ENCODE measurements at regions of chrX and their contacts with region 1.

Region 1: GRCh38 chrX:119067023-119067739 is 5.6 kb upstream of the CT47C1 start:
- DNase-seq: peak; percentile 52
- H3K4me3 ChIP-seq: no peak overlapping the region
- H3K27ac ChIP-seq: no peak overlapping the region
- H3K4me1 ChIP-seq: no peaks in the 10 kb centered on the region
- H3K27me3 ChIP-seq: no peaks in the 10 kb centered on the region
- CTCF ChIP-seq: peak; percentile 47 to 72 (median 56)
- EP300 ChIP-seq: no peak
- POLR2A ChIP-seq: no peak

Region 2: DNA sequence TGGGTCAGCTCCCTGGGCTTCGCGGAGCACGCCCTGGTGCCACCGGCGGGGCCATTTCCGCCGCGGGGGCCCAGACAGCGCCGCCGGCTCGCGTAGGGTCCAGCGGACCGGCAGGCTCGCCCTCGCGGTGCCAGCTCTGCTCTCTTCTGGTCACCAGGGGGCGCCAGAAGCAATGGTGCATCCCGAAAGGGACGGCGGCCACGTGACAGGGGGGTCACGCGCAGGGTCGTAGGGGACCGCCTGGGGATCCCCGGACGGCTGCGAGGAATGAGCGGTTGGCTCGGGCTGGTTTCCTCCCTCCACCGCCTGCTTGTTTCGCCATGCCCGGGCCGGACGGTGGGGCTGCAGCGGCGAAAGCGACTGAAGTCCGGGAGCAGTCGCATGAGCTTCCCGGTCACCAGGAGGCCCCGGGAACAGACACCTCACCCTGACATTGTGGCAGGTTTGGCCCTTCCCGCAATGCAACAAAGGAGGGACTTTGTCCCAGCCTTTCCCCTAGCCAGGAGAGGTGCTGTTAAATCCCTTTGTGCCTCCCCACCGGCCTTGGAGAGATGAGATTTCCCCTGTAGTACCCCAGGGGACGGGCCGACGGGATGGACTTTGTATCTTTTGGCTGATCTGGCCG is 227.7 kb before region 1 on chrX:
- in situ Hi-C with region 1: loop called in 1 of 4 experiments (anchors 25 kb)
- intact Hi-C with region 1: no loop called
- DNase-seq: peak; percentile 80
- H3K4me3 ChIP-seq: peak overlapping the region in 3 of 4 donors; percentile 30 to 56 (median 39)
- H3K27ac ChIP-seq: no peak overlapping the region
- H3K4me1 ChIP-seq: no peaks in the 10 kb centered on the region
- H3K27me3 ChIP-seq: no peaks in the 10 kb centered on the region
- CTCF ChIP-seq: peak; percentile 61 to 79 (median 71)
- EP300 ChIP-seq: no peak
- POLR2A ChIP-seq: no peak

Region 3: GRCh38 chrX:118847676-118848075 is 219.5 kb before region 1 on chrX:
- in situ Hi-C with region 1: loop called in 2 of 4 experiments (anchors 5 to 25 kb)
- intact Hi-C with region 1: loop called (anchors 5 kb)
- DNase-seq: no peak
- H3K4me3 ChIP-seq: no peak overlapping the region
- H3K27ac ChIP-seq: no peak overlapping the region
- H3K4me1 ChIP-seq: no peaks in the 10 kb centered on the region
- H3K27me3 ChIP-seq: no peaks in the 10 kb centered on the region
- CTCF ChIP-seq: peak; percentile 45 to 64 (median 57)
- EP300 ChIP-seq: no peak
- POLR2A ChIP-seq: no peak

Region 4: GRCh38 chrX:119015407-119016237 is 51.6 kb before region 1 on chrX:
- in situ Hi-C with region 1: loop called in 2 of 4 experiments (anchors 10 kb)
- intact Hi-C with region 1: no loop called
- DNase-seq: peak; percentile 32
- H3K4me3 ChIP-seq: no peak overlapping the region
- H3K27ac ChIP-seq: no peak overlapping the region
- H3K4me1 ChIP-seq: no peaks in the 10 kb centered on the region
- H3K27me3 ChIP-seq: no peaks in the 10 kb centered on the region
- CTCF ChIP-seq: no peak
- EP300 ChIP-seq: no peak
- POLR2A ChIP-seq: no peak

Region 5: DNA sequence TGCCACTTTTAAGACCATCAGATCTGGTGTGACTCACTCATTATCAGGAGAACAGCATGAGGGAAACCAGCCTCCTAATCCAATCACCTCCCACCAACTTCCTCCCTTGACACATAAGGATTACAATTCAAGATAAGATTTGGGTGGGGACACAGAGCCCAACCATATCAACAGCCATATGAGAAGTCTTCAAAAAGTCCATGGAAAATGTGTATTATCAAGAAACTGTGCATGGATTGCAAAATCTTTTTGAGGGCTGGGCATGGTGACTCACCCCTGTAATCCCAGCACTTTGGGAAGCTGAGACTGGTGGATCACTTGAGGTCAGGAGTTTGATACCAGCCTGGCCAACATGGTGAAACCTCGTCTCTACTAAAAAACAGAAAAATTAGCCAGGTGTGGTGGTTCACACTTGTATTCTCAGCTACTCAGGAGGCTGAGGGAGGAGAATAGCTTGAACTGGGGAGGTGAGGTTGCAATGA is 742.0 kb after region 1 on chrX:
- in situ Hi-C with region 1: no loop called
- intact Hi-C with region 1: no loop called
- DNase-seq: no peak
- H3K4me3 ChIP-seq: no peak overlapping the region
- H3K27ac ChIP-seq: no peak overlapping the region
- H3K4me1 ChIP-seq: no peaks in the 10 kb centered on the region
- H3K27me3 ChIP-seq: no peaks in the 10 kb centered on the region
- CTCF ChIP-seq: no peak
- EP300 ChIP-seq: no peak
- POLR2A ChIP-seq: no peak

Measured in transverse colon (tissue), 4 donors.